Transverse colon (tissue), 4 donors: ENCODE measurements at regions of chr16 and their contacts with region 1.

Region 1: DNA sequence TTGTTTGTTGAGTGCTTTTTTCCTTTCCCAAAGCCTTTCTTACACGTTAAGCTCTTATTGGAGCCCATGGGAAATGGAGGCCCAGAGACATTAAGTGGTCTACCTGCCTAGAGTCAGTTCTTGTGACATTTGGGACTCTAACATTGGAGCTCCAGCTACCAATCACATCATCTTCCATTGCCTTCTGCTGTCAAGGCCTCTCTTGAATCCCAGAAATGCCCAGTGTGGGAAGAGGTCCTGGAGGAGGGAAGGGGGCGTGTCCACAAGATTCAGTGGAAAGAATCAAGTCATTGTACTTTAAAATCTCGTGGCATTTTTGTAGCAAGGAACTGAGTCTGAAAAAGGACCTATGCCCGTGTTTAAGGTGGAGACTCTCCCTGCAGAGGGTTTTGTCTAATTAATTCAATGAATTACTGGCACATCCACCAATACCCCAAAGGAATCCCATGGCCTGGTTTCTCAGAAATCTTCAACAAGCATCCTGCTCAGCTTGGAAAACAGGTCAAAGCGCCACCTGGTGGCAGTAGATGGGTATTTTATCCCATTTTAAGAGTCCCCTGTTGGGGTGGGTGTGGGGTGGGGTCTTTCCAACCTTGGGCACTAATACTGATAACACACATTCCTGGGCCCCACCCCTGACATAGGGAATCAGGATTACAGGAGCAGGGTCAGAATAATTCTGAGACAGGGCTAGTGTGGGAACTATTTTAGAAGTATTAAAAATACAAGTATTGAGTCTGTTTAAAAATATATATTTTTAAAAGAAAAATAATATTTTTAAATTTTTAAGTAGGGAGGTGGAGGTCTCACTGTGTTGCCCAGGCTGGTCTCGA is 24.6 kb downstream of the GPT2 start:
- DNase-seq: peak; percentile 47
- H3K4me3 ChIP-seq: no peak overlapping the region
- H3K27ac ChIP-seq: no peak overlapping the region
- H3K4me1 ChIP-seq: peaks cover 0 to 10% (median 9%) of the 10 kb centered on the region in 4 donors
- H3K27me3 ChIP-seq: no peaks in the 10 kb centered on the region
- CTCF ChIP-seq: peak; percentile 67 to 89 (median 81)
- EP300 ChIP-seq: no peak
- POLR2A ChIP-seq: no peak

Region 2: DNA sequence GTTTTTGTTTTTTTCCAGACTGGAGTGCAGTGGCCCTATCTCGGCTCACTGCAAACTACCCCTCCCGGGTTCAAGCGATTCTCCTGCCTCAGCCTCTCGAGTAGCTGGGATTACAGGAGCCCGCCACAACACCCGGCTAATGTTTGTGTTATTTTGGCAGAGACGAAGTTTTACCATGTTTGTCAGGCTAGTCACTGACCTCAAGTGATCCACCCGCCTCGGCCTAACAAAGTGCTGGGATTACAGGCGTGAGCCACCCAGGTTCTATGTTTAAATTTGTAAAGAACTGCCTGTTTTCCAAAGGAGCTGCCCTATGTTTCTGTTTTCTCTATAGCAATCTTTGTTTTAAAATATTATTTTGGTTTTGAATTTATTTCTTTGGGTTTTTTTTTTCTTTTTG is 64.0 kb before region 1 on chr16:
- in situ Hi-C with region 1: loop called in 1 of 4 experiments (anchors 5 kb)
- intact Hi-C with region 1: no loop called
- DNase-seq: no peak
- H3K4me3 ChIP-seq: no peak overlapping the region
- H3K27ac ChIP-seq: no peak overlapping the region
- H3K4me1 ChIP-seq: peaks cover 0 to 2% (median 0%) of the 10 kb centered on the region in 4 donors
- H3K27me3 ChIP-seq: peaks cover 6% of the 10 kb centered on the region
- CTCF ChIP-seq: no peak
- EP300 ChIP-seq: no peak
- POLR2A ChIP-seq: no peak

Region 3: DNA sequence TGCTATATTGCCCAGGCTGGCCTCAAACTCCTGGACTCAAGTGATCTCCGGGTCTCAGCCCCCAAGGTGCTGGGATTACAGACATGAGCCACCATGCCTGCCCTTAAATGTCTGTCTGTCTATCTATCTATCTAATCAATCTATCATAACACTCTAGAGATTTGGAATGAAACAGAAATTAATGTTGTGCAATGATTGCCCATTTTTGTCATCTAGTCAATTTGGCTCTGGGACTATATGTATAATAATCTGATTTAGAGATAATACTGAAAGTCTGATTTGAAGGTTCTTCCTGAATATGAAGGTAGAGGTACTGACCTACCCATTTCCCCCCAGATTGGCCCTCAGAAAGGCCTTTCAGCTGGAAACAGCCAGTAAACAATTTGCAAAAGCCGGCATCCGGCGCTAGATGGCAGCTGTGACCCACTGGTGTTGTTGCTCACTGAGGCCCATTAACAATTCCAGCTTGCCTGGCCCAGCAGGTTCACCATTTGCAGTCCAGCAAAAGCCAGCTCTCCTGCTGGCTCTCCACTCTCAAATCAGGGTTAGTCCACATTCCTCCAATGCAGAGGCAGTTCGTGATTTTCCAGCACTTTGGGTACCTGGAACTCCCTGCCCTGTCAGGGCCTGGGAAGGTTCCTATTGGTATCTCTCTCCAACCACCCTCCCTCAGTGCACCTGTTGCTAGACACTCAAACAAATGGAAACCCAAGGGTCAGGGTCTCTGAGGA is 54.9 kb before region 1 on chr16:
- in situ Hi-C with region 1: loop called in 3 of 4 experiments (anchors 5 kb)
- intact Hi-C with region 1: loop called (anchors 2 kb)
- DNase-seq: peak; percentile 84
- H3K4me3 ChIP-seq: no peak overlapping the region
- H3K27ac ChIP-seq: no peak overlapping the region
- H3K4me1 ChIP-seq: peaks cover 4 to 17% (median 5%) of the 10 kb centered on the region in 4 donors
- H3K27me3 ChIP-seq: no peaks in the 10 kb centered on the region
- CTCF ChIP-seq: peak; percentile 76 to 84 (median 79)
- EP300 ChIP-seq: no peak
- POLR2A ChIP-seq: no peak

Region 4: DNA sequence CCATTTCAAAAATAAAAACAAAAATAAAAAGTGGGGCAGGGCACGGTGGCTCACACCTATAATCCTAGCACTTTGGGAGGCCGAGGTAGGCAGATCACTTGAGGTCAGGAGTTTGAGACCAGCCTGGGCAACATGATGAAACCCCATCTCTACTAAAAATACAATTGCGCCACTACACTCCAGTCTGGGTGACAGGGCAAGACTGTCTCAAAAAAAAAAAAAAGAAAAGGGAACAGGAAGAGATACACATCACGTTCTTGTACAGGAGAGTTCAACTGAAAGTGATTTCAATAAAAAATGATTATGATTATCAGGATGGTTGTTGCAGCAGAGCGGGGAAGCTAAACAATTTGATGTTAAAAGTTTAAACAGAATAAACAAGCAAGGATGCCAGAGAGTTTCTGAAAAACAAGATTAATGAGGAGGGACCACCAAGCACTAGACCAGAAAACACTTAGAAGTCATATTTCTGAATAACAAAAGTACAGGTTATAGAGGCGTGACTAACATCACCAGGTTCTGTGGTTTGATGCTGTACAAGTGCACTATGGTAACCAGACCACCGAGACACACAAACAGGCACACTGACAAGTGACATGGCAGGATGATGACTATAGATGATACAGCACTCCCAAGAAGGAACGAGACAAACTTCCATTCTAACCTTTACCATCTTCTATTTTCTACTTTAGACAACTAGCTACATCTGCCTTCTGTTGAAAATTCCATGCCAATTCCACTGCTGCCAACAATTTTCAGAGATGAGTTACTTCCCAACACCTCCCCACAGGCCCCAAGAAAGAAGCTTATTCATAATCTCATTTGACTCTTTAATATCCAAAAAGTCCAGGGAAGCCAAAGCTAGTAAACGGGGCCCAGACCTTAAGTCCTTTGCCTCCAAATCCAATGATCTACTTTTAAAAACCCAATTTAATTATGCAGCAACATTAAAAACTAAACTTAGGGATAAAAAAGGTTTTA is 52.9 kb after region 1 on chr16:
- in situ Hi-C with region 1: no loop called
- intact Hi-C with region 1: no loop called
- DNase-seq: no peak
- H3K4me3 ChIP-seq: no peak overlapping the region
- H3K27ac ChIP-seq: no peak overlapping the region
- H3K4me1 ChIP-seq: peaks cover 0 to 19% (median 6%) of the 10 kb centered on the region in 4 donors
- H3K27me3 ChIP-seq: no peaks in the 10 kb centered on the region
- CTCF ChIP-seq: no peak
- EP300 ChIP-seq: no peak
- POLR2A ChIP-seq: no peak

Region 5: GRCh38 chr16:47037746-47038458 is 129.1 kb after region 1 on chr16:
- in situ Hi-C with region 1: no loop called
- intact Hi-C with region 1: no loop called
- DNase-seq: peak; percentile 92
- H3K4me3 ChIP-seq: peak overlapping the region; percentile 25 to 73 (median 52)
- H3K27ac ChIP-seq: peak overlapping the region; percentile 47 to 69 (median 60)
- H3K4me1 ChIP-seq: peaks cover 0 to 4% (median 2%) of the 10 kb centered on the region in 4 donors
- H3K27me3 ChIP-seq: peaks cover 7% of the 10 kb centered on the region
- CTCF ChIP-seq: peak; percentile 86 to 96 (median 95)
- EP300 ChIP-seq: no peak
- POLR2A ChIP-seq: no peak